H1 (cell line): ENCODE measurements at regions of chr20 and their contacts with region 1.

Region 1: GRCh38 chr20:20466341-20466879 is 98.5 kb downstream of the INSM1 start:
- DNase-seq: no peak
- H3K4me3 ChIP-seq: no peak overlapping the region
- H3K27ac ChIP-seq: no peak overlapping the region
- H3K4me1 ChIP-seq: peaks cover 9 to 28% (median 16%) of the 10 kb centered on the region in 4 experiments
- H3K27me3 ChIP-seq: no peaks in the 10 kb centered on the region
- CTCF ChIP-seq: no peak
- EP300 ChIP-seq: no peak
- POLR2A ChIP-seq: no peak
- RAD21 ChIP-seq: no peak

Region 2: GRCh38 chr20:20452254-20452676 is 14.1 kb before region 1 on chr20:
- CTCF ChIA-PET with region 1: interaction called, 25 read pairs
- POLR2A ChIA-PET with region 1: interaction called, 4 read pairs
- DNase-seq: peak; percentile 41 to 76
- H3K4me3 ChIP-seq: peak overlapping the region in 2 of 4 experiments; percentile 7 to 40; a peak in 2 of 8 replicates
- H3K27ac ChIP-seq: no peak overlapping the region
- H3K4me1 ChIP-seq: peaks cover 0 to 7% (median 4%) of the 10 kb centered on the region in 4 experiments; a peak in 5 of 7 replicates
- H3K27me3 ChIP-seq: no peaks in the 10 kb centered on the region
- CTCF ChIP-seq: peak in 2 of 3 experiments; percentile 10 to 21; a peak in 3 of 4 replicates
- EP300 ChIP-seq: no peak
- POLR2A ChIP-seq: no peak
- RAD21 ChIP-seq: peak; percentile 17 to 19; a peak in 1 of 4 replicates